ENCODE measurements at regions of chr7 and their contacts with region 1.

Region 1: DNA sequence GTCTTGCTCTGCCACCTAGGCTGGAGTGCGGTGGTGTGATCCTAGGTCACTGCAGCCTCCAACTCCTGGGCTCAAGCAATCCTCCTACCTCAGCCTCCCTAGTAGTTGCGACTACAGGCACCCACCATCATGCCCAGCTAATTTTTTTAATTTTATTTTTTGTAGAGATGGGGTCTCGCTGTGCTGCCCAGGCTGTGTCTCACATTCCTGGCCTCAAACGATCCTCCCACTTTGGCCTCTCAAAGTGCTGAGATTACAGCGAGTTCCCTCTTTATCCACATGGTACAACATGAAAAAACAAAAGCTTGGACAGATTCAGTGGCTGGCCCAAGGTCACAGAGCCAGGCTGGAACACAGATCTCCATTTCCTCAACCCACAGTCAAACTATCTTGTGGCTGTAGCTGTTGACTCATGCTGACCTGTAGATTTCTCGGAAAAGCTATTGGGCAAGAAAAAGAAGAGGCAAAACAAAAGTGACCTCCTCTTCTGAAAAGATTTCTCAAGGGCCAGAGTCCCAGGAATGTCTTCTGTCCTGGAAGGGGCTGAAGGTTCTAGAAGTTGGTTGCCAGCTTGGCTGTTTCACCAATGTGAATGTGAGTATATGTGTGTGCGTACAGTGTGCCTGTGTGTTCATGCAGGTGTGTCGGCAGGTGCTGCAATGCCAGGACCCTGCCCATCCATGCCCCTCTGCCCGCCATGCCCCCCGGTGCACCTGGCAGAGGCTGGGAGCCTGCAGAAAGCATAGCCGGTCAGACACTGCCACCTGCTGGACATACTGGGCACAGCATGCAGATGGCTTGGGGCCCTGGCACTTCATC is 28.4 kb downstream of the TMEM130 start:
- DNase-seq: peak; percentile 80
- ATAC-seq: peak; percentile 90
- H3K4me3 Mint-ChIP-seq: no peak overlapping the region
- H3K27ac Mint-ChIP-seq: no peak overlapping the region
- H3K4me1 Mint-ChIP-seq: no peaks in the 10 kb centered on the region
- H3K27me3 Mint-ChIP-seq: peaks cover 5% of the 10 kb centered on the region
- CTCF ChIP-seq: peak; percentile 87

Region 2: GRCh38 chr7:98420966-98421612 is 420.3 kb before region 1 on chr7:
- CTCF ChIA-PET with region 1: interaction called, 20 read pairs
- POLR2A ChIA-PET with region 1: no interaction called
- intact Hi-C with region 1: no loop called
- DNase-seq: peak; percentile 73
- ATAC-seq: peak; percentile 82
- H3K4me3 Mint-ChIP-seq: no peak overlapping the region
- H3K27ac Mint-ChIP-seq: no peak overlapping the region
- H3K4me1 Mint-ChIP-seq: peaks cover 4% of the 10 kb centered on the region
- H3K27me3 Mint-ChIP-seq: peaks cover 6% of the 10 kb centered on the region
- CTCF ChIP-seq: peak; percentile 91

Region 3: DNA sequence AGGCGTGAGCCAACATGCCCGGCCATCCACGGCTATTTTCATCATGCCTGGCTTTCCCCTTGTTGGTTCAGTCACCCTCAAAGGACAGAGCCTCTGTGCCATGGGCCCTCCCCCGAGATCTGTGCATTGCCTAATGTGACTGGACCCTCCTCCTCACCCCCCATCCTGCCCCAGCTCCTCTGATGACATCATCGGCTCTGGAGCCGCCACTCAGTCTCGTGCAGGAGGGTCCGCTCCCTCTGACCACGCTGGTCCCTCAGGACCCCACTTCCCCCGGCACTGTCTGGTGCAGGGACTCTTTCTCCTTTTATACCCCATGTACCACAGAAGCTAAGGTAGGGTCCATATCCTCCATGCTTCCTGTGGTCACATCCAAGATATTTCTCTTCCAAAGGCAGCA is 407.3 kb before region 1 on chr7:
- CTCF ChIA-PET with region 1: interaction called, 42 read pairs
- POLR2A ChIA-PET with region 1: no interaction called
- intact Hi-C with region 1: loop called (anchors 1 kb)
- DNase-seq: no peak
- ATAC-seq: no peak
- H3K4me3 Mint-ChIP-seq: no peak overlapping the region
- H3K27ac Mint-ChIP-seq: no peak overlapping the region
- H3K4me1 Mint-ChIP-seq: no peaks in the 10 kb centered on the region
- H3K27me3 Mint-ChIP-seq: peaks cover 5% of the 10 kb centered on the region
- CTCF ChIP-seq: no peak

Region 4: DNA sequence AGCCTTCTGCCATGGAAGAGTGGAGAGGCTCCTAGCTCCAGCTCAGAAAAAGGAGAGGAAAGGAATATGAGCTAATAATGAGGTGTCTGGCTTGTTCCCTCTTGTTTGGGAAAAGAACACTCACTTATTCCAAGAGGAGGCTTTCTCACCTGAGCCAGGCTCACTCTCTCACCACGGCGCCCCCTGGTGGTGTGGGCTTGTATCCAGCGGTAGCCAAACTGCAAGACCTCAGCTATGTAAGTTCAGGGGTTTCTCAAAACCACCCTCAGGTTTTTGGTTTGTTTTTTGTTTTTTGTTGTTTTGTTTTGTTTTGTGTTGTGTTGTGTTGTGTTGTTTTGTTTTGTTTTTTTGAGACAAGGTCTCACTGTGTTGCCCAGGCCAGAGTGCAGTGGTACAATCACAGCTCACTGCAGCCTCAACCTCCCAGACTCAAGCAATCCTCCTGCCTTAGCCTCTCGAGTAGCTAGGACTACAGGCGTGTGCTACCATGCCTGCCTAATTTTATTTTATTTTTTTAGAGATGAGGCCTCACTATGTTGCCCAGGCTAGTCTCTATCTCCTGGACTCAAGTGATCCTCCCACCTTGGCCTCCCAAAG is 95.6 kb before region 1 on chr7:
- CTCF ChIA-PET with region 1: interaction called, 28 read pairs
- POLR2A ChIA-PET with region 1: no interaction called
- intact Hi-C with region 1: no loop called
- DNase-seq: peak; percentile 83
- ATAC-seq: peak; percentile 64
- H3K4me3 Mint-ChIP-seq: no peak overlapping the region
- H3K27ac Mint-ChIP-seq: no peak overlapping the region
- H3K4me1 Mint-ChIP-seq: no peaks in the 10 kb centered on the region
- H3K27me3 Mint-ChIP-seq: peaks cover 3% of the 10 kb centered on the region
- CTCF ChIP-seq: peak; percentile 76

Region 5: DNA sequence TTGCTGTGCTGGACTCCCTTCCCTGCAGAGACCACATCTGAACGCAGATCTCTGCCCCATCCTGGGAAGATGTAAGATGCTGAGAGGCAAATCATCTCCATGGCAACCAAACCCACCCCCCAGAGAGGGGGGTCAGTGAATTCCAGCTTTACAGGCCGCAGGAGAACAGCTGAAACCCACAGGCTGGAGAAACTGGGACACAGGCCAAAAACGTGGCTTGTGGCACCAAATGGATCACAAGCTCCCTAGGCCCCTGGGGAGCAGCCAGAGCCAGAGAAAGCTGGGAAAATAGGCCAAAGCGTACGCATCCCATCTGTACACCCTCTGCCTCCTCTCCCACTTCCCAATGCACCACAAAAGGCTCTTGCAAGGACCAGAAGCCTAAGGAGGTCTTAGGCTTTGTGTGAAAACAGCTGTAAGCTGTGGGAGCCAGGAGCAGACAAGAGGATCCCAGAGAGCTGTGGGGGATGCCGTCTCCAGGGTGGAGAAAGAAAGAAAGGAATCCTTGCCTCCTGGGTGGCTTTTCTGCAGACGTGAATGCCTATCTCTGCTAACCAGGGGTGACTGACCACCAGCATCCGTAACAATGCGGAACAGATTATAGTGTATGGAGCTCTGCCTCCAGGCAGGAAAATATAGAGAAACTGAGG is 31.1 kb before region 1 on chr7:
- CTCF ChIA-PET with region 1: no interaction called
- POLR2A ChIA-PET with region 1: no interaction called
- intact Hi-C with region 1: no loop called
- DNase-seq: no peak
- ATAC-seq: no peak
- H3K4me3 Mint-ChIP-seq: no peak overlapping the region
- H3K27ac Mint-ChIP-seq: no peak overlapping the region
- H3K4me1 Mint-ChIP-seq: no peaks in the 10 kb centered on the region
- H3K27me3 Mint-ChIP-seq: peaks cover 6% of the 10 kb centered on the region
- CTCF ChIP-seq: no peak

Region 6: GRCh38 chr7:98993024-98993897 is 151.9 kb after region 1 on chr7:
- CTCF ChIA-PET with region 1: no interaction called
- POLR2A ChIA-PET with region 1: no interaction called
- intact Hi-C with region 1: no loop called
- DNase-seq: no peak
- ATAC-seq: no peak
- H3K4me3 Mint-ChIP-seq: no peak overlapping the region
- H3K27ac Mint-ChIP-seq: no peak overlapping the region
- H3K4me1 Mint-ChIP-seq: peaks cover 27% of the 10 kb centered on the region
- H3K27me3 Mint-ChIP-seq: no peaks in the 10 kb centered on the region
- CTCF ChIP-seq: no peak